ENCODE measurements at regions of chr9 and their contacts with region 1.

Region 1: DNA sequence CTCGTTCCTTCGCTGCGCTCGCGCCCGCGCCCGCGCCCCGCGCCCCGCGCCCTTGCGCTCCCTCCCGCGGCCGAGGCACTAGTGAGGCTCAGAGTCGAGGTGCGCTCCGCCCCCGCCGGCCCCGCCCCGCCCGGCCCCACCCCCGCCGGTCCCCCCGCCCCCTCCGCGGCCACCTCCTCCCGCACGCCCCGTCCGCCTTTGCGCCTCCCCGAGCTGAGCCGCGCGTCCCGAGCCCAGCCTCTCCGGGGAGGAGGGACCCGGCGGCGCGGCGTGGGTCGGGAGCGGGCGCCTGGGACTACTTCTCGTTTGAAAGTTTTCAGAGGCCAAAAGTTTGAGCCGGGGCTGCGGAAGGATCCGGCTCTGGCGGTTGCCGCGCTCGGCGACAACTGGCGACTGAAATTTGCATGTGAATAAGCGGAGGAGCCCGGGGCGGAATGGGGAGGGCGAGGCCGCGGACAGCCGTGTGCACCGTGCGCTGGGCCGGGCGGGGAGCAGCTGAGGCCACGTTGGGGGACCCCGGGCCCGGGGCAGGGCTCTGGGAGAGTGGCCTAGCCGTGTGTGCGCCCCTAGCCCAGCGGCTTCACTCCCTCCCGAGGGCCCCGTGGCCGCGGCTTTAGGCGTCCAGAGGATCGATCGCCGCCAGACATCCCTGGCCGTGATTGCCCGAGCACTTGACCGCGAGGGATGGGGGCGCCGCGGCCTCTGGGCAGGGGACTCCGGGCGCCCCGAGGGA is at the start of gene NOTCH1:
- DNase-seq: peak; percentile 90
- ATAC-seq: peak; percentile 76
- H3K4me3 Mint-ChIP-seq: peak within 1 kb of the TSS; percentile 93
- H3K27ac Mint-ChIP-seq: peak within 1 kb of the TSS; percentile 89
- H3K4me1 Mint-ChIP-seq: peaks cover 11% of the 10 kb centered on the region
- H3K27me3 Mint-ChIP-seq: no peaks in the 10 kb centered on the region
- total RNA-seq, gene NOTCH1: 67.0 to 70.2 TPM

Region 2: DNA sequence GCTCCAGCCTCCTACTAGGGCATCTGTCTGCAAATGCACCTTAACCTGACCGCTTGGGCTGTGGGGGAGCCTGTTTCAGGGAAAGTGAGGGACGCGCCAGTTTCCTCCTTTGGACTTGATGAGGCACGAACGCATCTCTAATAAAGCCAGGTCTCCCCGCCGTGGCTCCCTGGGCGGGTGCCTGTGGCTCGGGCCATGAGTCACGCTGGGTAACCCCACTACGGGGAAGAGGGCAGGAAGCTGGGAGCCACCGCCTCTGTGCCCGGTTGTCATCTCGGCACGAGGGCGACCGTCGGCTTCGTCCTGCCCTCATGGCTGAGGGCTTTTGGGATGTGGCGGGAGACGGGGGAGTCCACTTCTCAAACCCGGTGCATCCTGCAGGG is 12.4 kb before region 1 on chr9:
- POLR2A ChIA-PET with region 1: interaction called, 22 read pairs
- DNase-seq: peak; percentile 74
- ATAC-seq: peak; percentile 56
- H3K4me3 Mint-ChIP-seq: peak overlapping the region; percentile 47
- H3K27ac Mint-ChIP-seq: peak overlapping the region; percentile 90
- H3K4me1 Mint-ChIP-seq: peaks cover 43% of the 10 kb centered on the region
- H3K27me3 Mint-ChIP-seq: no peaks in the 10 kb centered on the region